ENCODE measurements at regions of chr2 and their contacts with region 1.

Region 1: DNA sequence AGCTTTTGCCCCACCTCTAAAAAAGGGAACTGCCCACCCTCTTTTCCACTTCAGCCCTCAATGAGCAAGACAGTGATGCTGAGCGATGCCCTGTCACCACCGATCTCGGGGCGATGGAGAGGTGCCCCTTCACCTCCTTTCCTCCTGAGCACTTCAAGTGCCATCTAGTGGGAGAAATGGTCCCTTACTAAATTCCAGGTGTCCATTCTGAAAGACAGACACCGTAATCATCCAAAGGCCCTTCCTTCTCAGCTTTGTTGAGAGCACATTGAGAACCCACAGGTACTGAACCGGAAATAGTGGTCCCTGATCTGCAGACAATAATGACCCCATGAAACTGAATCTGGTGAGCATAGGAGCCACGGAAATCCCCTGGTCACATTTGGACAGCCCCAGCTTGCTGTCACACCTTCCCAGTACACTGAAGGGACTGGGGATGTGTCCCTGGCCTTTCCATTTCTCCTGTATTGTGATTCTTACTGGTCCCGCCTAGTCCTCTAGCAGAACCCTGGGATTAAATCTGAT is 38.5 kb downstream of the KCTD18 start:
- DNase-seq: peak; percentile 70
- ATAC-seq: peak; percentile 16
- H3K4me3 Mint-ChIP-seq: no peak overlapping the region
- H3K27ac Mint-ChIP-seq: peak overlapping the region; percentile 4
- H3K4me1 Mint-ChIP-seq: peaks cover 39% of the 10 kb centered on the region
- H3K27me3 Mint-ChIP-seq: no peaks in the 10 kb centered on the region

Region 2: GRCh38 chr2:199910338-199911051 is 560.9 kb before region 1 on chr2:
- CTCF ChIA-PET with region 1: no interaction called
- POLR2A ChIA-PET with region 1: no interaction called
- intact Hi-C with region 1: no loop called
- DNase-seq: no peak
- ATAC-seq: no peak
- H3K4me3 Mint-ChIP-seq: peak overlapping the region; percentile 96
- H3K27ac Mint-ChIP-seq: peak overlapping the region; percentile 89
- H3K4me1 Mint-ChIP-seq: peaks cover 21% of the 10 kb centered on the region
- H3K27me3 Mint-ChIP-seq: peaks cover 2% of the 10 kb centered on the region

Region 3: GRCh38 chr2:200306196-200306930 is 165.0 kb before region 1 on chr2 and contains the start of gene SPATS2L:
- CTCF ChIA-PET with region 1: interaction called, 3 read pairs
- POLR2A ChIA-PET with region 1: no interaction called
- intact Hi-C with region 1: loop called (anchors 2 to 5 kb)
- DNase-seq: peak; percentile 75
- ATAC-seq: peak; percentile 71
- H3K4me3 Mint-ChIP-seq: peak within 1 kb of the TSS; percentile 80
- H3K27ac Mint-ChIP-seq: peak within 1 kb of the TSS; percentile 87
- H3K4me1 Mint-ChIP-seq: peaks cover 21% of the 10 kb centered on the region
- H3K27me3 Mint-ChIP-seq: peaks cover 18% of the 10 kb centered on the region
- total RNA-seq, gene SPATS2L: 14.7 to 25.8 TPM

Region 4: GRCh38 chr2:200373973-200374416 is 97.4 kb before region 1 on chr2:
- CTCF ChIA-PET with region 1: interaction called, 6 read pairs
- POLR2A ChIA-PET with region 1: no interaction called
- intact Hi-C with region 1: loop called in 1 of 2 experiments (anchors 1 kb)
- DNase-seq: peak; percentile 57
- ATAC-seq: peak; percentile 92
- H3K4me3 Mint-ChIP-seq: peak overlapping the region; percentile 67
- H3K27ac Mint-ChIP-seq: peak overlapping the region; percentile 79
- H3K4me1 Mint-ChIP-seq: peaks cover 46% of the 10 kb centered on the region
- H3K27me3 Mint-ChIP-seq: no peaks in the 10 kb centered on the region

Region 5: GRCh38 chr2:200447139-200447855 is 24.1 kb before region 1 on chr2:
- CTCF ChIA-PET with region 1: interaction called, 3 read pairs
- POLR2A ChIA-PET with region 1: no interaction called
- intact Hi-C with region 1: loop called in 1 of 2 experiments (anchors 2 kb)
- DNase-seq: no peak
- ATAC-seq: peak; percentile 73
- H3K4me3 Mint-ChIP-seq: peak overlapping the region; percentile 1
- H3K27ac Mint-ChIP-seq: peak overlapping the region; percentile 59
- H3K4me1 Mint-ChIP-seq: peaks cover 26% of the 10 kb centered on the region
- H3K27me3 Mint-ChIP-seq: no peaks in the 10 kb centered on the region

Region 6: DNA sequence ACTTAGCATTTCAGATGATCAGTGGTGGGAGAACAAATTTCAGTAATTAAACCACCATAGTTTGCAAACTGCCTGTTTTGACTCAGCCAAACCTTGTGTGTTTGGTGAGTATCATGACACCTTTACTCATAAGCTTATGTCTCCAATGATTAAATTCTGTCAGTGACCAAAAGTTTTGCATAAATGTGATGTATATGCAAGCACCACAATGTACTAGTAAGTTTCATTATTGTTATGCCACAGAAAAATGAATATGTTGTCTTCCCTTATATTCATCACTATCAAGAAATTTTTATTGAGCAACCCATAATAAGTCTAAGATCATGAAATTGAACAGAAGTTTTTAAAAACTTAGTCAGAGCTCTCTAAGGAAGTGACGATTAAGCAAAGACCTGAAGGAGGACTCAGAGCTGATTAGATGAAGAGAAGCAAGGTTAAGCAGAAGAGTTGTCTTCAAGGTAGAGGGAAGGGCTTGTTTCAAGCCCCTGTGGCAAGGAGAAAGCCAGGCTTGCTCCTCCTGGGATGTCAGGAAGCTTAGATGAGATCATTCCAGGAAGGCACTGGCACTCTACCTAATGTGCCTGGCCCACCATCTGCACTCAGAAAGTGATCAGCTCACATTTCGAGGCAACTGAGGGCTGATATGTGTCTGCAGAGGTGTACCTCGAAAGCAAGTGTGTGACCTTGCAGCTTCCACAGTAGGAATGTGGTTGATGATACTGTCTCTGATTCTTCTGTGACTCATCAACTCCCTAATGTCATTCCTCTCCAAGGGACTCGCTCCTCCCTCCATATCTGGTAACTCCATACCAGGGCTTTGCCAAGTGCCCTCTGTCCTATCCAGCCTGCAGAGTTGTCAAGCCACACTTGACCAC is 16.2 kb before region 1 on chr2:
- CTCF ChIA-PET with region 1: interaction called, 8 read pairs
- POLR2A ChIA-PET with region 1: interaction called, 19 read pairs
- intact Hi-C with region 1: loop called (anchors 1 kb)
- DNase-seq: peak; percentile 41
- ATAC-seq: peak; percentile 78
- H3K4me3 Mint-ChIP-seq: peak overlapping the region; percentile 10
- H3K27ac Mint-ChIP-seq: peak overlapping the region; percentile 96
- H3K4me1 Mint-ChIP-seq: peaks cover 33% of the 10 kb centered on the region
- H3K27me3 Mint-ChIP-seq: no peaks in the 10 kb centered on the region

Region 7: GRCh38 chr2:200483729-200484198 is 12.4 kb after region 1 on chr2:
- CTCF ChIA-PET with region 1: interaction called, 14 read pairs
- POLR2A ChIA-PET with region 1: no interaction called
- intact Hi-C with region 1: no loop called
- DNase-seq: peak; percentile 72
- ATAC-seq: peak; percentile 69
- H3K4me3 Mint-ChIP-seq: no peak overlapping the region
- H3K27ac Mint-ChIP-seq: no peak overlapping the region
- H3K4me1 Mint-ChIP-seq: peaks cover 5% of the 10 kb centered on the region
- H3K27me3 Mint-ChIP-seq: no peaks in the 10 kb centered on the region